Heart left ventricle (tissue), 16 donors: ENCODE measurements at regions of chr5 and their contacts with region 1.

Region 1: GRCh38 chr5:147558826-147559225 is 49.0 kb upstream of the DPYSL3 start:
- DNase-seq: peak in 4 of 5 donors; percentile 49 to 62 (median 53)
- ATAC-seq: peak; percentile 64 to 88 (median 84)
- H3K4me3 ChIP-seq: no peak overlapping the region
- H3K27ac ChIP-seq: peak overlapping the region in 5 of 12 donors; percentile 1 to 38 (median 20)
- H3K4me1 ChIP-seq: peaks cover 0 to 28% (median 7%) of the 10 kb centered on the region in 12 donors
- H3K27me3 ChIP-seq: no peaks in the 10 kb centered on the region
- CTCF ChIP-seq: peak; percentile 27 to 75 (median 68)
- POLR2A ChIP-seq: no peak

Region 2: GRCh38 chr5:147223948-147224791 is 334.7 kb before region 1 on chr5:
- intact Hi-C with region 1: loop called in 4 of 10 experiments (anchors 5 kb)
- DNase-seq: peak in 1 of 5 donors; percentile 30
- ATAC-seq: peak; percentile 51 to 83 (median 70)
- H3K4me3 ChIP-seq: no peak overlapping the region
- H3K27ac ChIP-seq: no peak overlapping the region
- H3K4me1 ChIP-seq: no peaks in the 10 kb centered on the region
- H3K27me3 ChIP-seq: peaks cover 0 to 8% (median 0%) of the 10 kb centered on the region in 9 donors
- CTCF ChIP-seq: peak; percentile 28 to 83 (median 62)
- POLR2A ChIP-seq: no peak

Region 3: GRCh38 chr5:147391781-147392180 is 167.0 kb before region 1 on chr5:
- intact Hi-C with region 1: loop called in 2 of 10 experiments (anchors 10 kb)
- DNase-seq: peak in 2 of 5 donors; percentile 45 to 66
- ATAC-seq: peak in 3 of 4 donors; percentile 71 to 90 (median 83)
- H3K4me3 ChIP-seq: no peak overlapping the region
- H3K27ac ChIP-seq: no peak overlapping the region
- H3K4me1 ChIP-seq: peaks cover 0 to 9% (median 0%) of the 10 kb centered on the region in 12 donors
- H3K27me3 ChIP-seq: no peaks in the 10 kb centered on the region
- CTCF ChIP-seq: peak in 11 of 12 donors; percentile 24 to 59 (median 40)
- POLR2A ChIP-seq: no peak

Region 4: DNA sequence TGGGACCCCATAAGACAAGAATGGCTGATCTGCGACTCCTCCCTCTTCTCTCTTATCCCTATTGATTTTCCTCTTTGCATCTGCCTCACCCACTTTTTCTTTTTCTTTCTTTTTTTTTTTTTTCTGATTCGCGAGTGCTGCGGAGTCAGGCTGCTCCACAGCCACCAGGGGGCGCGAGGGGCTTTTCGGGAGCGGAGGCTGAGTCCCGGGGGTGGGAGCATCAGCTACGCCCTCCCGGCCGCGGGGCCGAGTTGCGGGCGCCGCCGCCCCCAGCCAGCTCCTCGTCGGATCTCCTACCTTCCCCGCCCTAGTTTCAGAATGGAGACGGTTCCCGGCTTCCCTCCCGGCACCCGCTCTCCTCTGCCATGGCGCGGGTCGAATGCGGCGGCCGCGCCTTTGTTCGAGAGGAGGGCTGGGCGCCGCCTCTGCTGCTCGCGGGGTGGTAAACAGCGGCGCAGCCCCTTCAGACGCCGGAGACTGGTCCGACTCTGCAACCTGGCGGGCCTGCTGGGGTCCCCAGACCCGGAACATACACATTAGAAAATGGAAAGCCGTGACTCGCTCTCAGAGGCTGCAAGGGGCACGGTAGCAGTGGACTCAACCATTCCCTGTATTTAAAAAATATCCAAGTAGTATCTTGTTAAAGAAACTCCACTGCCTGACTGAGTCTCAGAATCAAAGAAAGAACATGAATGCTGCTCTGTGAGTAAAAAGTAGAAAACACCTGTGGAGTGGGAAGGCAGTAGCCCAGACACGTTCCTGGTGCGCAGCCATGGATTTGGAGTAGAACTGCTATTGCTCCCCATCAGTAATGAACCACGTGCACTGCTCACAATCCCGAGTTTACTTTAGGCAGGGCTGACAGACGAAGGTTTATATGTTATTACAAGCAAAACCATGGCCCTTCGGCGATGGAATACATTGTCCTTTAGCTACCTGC is 104.7 kb before region 1 on chr5:
- intact Hi-C with region 1: loop called in 7 of 10 experiments (anchors 2 to 5 kb)
- DNase-seq: peak; percentile 85 to 94 (median 91)
- ATAC-seq: peak; percentile 79 to 89 (median 88)
- H3K4me3 ChIP-seq: peak overlapping the region; percentile 41 to 92 (median 72)
- H3K27ac ChIP-seq: peak overlapping the region; percentile 75 to 95 (median 86)
- H3K4me1 ChIP-seq: peaks cover 0 to 53% (median 18%) of the 10 kb centered on the region in 12 donors
- H3K27me3 ChIP-seq: peaks cover 0 to 9% (median 0%) of the 10 kb centered on the region in 9 donors
- CTCF ChIP-seq: peak; percentile 85 to 96 (median 90)
- POLR2A ChIP-seq: peak in 1 of 2 donors; percentile 33

Region 5: DNA sequence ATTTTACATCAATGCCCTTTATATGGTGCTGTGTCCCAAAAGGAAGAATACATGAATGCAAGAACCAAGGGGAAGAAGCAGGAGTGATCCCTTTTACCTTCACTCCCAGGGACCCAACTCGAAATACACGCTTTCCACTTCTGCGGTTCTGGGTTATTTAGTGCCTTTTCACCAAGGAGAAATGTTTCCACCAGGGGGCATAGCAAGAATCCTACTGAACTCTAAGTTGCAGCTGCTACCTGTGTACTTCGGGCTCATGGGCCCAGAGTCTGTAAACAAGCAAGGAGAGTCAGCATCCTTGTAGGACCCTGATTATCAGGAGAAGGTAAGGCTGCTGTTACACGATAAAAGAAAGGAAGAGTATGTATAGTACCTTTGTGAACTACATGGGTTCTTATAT is 94.6 kb before region 1 on chr5:
- intact Hi-C with region 1: loop called in 5 of 10 experiments (anchors 1 to 5 kb)
- DNase-seq: no peak
- ATAC-seq: peak in 2 of 4 donors; percentile 27 to 30
- H3K4me3 ChIP-seq: no peak overlapping the region
- H3K27ac ChIP-seq: no peak overlapping the region
- H3K4me1 ChIP-seq: peaks cover 0 to 33% (median 11%) of the 10 kb centered on the region in 12 donors
- H3K27me3 ChIP-seq: no peaks in the 10 kb centered on the region
- CTCF ChIP-seq: peak in 11 of 12 donors; percentile 30 to 66 (median 42)
- POLR2A ChIP-seq: no peak

Region 6: DNA sequence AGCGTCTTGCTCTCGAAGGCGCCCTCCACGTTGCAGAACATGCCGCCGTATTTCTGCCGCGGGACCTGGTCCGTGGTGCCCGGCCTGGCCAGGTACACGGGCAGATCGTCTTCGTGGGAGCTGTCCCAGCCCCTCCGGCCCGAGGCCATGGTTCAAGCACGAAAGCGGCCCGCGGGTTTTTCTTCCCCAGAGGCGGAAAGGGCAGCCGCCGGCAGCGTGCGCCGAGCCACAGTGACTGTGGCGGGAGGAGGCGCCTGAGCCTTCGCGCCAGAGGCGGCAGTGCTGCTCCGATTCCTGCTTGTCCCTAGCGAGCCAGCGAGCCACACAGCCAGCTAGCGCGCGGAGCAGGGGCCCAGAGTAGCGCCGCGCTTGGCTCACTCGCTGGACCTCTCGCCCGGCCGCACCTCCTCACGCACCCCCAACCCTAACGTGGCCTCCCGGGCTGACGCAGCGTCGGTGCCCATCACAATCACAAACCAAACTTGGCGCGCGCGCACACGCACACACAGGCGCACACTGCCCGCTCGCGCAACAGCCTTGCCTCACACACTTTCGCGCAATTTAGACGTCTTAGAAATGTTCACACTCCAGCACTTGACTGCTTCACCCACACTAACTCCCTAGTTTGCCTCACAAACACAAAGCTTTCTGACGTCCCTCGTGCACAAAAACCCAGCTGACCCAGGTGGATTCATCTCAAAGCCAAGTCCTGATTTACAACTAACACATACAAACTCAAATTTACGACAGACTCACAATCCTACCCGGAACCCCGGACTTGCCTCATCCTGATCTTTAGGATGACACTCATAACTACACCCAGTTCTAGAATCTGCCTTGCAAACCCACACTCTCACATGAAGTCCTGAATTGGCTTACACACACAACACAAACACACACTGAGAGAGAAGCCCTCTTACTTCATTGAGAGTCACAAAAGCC is 48.8 kb before region 1 on chr5 and contains the start of gene DPYSL3:
- intact Hi-C with region 1: loop called in 3 of 10 experiments (anchors 5 kb)
- DNase-seq: peak; percentile 72 to 86 (median 82)
- ATAC-seq: peak; percentile 80 to 97 (median 95)
- H3K4me3 ChIP-seq: peak within 1 kb of the TSS; percentile 42 to 84 (median 66)
- H3K27ac ChIP-seq: peak within 1 kb of the TSS; percentile 34 to 91 (median 76)
- H3K4me1 ChIP-seq: peaks cover 0 to 20% (median 8%) of the 10 kb centered on the region in 12 donors
- H3K27me3 ChIP-seq: peaks cover 0 to 25% (median 0%) of the 10 kb centered on the region in 9 donors
- CTCF ChIP-seq: peak in 11 of 12 donors; percentile 6 to 64 (median 36)
- POLR2A ChIP-seq: peak in 1 of 2 donors; percentile 45
- total RNA-seq, gene DPYSL3: 13.7 to 54.7 (median 25.0) TPM